Activated T-helper 2 cell treated with anti-CD3 and anti-CD28 coated beads, Interferon-gamma antibody, Interleukin-2, Interleukin-4, amounts not matched to agents 10 μg/mL and 5 μg/mL and 100 μg/mL, durations not matched to agents 14 hours and 24 hours and 36 hours (primary cell): ENCODE measurements at regions of chr6 and their contacts with region 1.

Region 1: DNA sequence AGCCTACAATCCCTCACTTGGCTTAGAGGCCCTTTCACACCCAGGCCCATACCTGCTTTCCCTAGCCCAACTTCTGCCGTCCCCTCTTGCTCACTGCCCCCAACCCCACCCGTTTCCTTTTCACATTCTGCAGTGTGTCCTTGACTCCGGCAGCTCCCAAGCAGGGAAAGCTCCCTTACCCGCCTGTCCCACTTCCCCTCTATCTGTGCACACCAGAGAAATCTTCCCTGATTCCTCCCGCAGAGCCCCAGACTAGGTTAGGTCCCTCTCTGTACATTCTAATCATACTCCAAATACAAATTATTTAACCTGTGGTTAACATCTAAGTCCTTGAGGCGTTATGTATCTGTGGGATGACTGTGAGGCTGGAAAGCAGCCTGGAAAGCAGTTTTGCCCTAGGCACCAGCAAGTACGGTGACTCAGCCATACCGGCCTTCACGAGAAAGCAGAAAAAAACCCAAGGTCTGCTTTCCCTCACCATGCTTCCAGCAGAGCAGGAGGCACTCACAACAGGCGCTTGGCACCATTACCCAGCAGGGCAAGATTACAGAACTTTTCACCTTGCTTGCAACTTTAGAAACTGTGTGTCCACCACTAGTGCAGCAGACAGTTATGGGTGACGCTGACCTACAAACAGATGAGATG is 22.3 kb downstream of the ELOVL5 start:
- DNase-seq: no peak
- H3K4me3 Mint-ChIP-seq: no peak overlapping the region
- H3K27ac Mint-ChIP-seq: no peak overlapping the region
- H3K4me1 Mint-ChIP-seq: peaks cover 47% of the 10 kb centered on the region
- H3K27me3 Mint-ChIP-seq: no peaks in the 10 kb centered on the region

Region 2: DNA sequence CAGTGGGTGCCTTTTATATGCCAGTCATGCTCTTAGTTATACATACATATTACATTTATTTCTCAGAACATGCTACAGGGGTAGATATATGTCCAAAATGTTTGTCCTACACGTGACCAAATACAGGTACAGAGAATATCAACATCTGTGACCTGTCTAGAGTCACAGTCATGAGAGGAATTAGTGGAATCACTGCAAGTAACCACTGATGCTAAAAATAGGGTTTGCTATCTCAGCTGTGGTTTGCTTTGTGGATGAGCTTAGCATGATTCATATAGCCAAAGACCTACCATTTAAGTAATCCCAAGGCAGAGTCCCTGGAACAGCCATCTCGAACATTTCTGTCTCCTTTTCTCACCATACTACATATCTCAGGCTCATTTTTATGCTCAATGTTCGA is 449.3 kb before region 1 on chr6:
- intact Hi-C with region 1: no loop called
- DNase-seq: no peak
- H3K4me3 Mint-ChIP-seq: no peak overlapping the region
- H3K27ac Mint-ChIP-seq: no peak overlapping the region
- H3K4me1 Mint-ChIP-seq: peaks cover 16% of the 10 kb centered on the region
- H3K27me3 Mint-ChIP-seq: peaks cover 32% of the 10 kb centered on the region

Region 3: GRCh38 chr6:53192682-53193188 is 133.8 kb before region 1 on chr6:
- intact Hi-C with region 1: no loop called
- DNase-seq: no peak
- H3K4me3 Mint-ChIP-seq: no peak overlapping the region
- H3K27ac Mint-ChIP-seq: no peak overlapping the region
- H3K4me1 Mint-ChIP-seq: peaks cover 7% of the 10 kb centered on the region
- H3K27me3 Mint-ChIP-seq: peaks cover 5% of the 10 kb centered on the region

Region 4: GRCh38 chr6:53315086-53315724 is 11.3 kb before region 1 on chr6:
- intact Hi-C with region 1: loop called (anchors 1 kb)
- DNase-seq: no peak
- H3K4me3 Mint-ChIP-seq: no peak overlapping the region
- H3K27ac Mint-ChIP-seq: peak overlapping the region; percentile 52
- H3K4me1 Mint-ChIP-seq: peaks cover 66% of the 10 kb centered on the region
- H3K27me3 Mint-ChIP-seq: no peaks in the 10 kb centered on the region